Right ventricle myocardium superior (tissue), 1 donor: ENCODE measurements at regions of chr9 and their contacts with region 1.

Region 1: DNA sequence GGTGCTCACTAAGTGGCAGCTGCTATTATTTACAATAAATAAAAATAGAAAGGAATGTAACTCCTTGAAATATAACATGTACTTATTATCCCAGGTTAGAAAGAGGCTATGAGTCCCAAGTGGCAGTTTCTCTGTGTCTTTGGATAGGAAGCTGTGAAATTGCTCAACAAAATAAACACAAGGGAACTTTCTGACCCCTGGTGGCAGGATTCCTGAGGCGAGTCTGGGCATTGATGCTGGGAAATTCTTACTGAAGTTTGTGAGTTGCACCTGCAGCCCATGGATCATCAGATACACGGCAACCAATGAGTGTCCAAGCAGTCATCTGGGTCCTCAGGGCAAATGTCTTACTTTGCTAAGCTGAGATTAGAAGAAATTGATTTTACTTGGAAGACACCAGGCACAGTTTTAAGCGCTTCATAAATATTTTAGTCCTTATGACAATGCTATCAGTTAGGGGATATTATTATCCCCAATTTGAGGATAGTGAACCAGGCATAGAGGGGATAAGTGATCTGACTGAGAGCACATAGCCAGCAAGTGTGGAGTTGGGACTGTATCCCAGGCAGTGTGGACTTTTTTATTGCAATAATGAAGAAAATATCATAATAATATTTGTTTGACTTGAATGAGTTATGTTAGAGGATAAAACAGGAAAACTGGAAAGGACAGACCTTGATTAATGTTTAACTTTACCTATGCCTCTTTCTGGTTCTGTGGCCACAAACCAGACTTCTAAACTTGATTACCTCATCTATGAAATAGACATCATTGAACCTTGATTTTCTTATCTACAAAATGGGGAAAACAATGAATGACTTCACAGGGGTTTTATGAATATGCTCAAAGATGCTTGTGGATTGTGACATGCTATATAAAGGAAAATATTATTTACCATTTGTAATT is 265.5 kb upstream of the ADAMTSL1 start:
- DNase-seq: no peak
- ATAC-seq: peak; percentile 61

Region 2: DNA sequence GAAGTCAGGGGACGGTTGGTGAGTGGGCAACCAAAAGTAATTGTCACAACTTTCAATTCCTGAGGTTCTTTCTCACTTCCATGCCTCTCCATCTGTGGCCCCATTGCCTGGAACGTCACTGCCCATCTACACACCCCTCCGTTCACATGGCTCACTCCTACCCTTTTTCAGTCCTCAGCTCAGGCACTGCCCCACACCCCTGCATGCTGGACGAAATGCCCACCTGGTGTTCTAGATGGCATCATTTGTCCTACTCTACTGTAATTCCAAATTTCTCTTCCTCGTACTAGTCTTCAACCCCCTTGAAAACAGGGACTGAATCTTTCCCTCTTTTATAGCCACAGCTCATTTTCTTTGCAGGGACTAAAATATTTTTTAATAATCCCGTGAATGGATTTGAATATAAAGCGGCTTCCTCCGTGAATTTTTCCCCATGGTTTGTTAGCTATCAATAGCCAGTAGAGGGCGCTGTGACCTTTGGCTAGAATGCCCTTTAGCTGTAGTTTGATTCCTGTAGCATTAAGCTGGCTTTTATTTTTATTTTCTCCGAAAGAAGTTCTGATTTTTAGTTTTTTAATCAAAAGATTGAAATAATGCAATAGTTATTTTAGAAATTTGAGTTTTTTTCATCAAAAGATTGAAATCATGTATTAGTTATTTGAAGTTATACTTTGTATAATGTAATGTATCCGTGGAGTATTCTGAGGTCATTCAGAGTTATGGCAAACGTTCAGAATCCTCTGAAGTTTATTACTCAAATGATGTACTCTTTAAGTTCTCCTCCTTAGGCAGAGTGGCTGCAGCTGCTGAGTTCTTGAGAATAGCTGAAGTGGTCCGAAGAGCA is 397.5 kb before region 1 on chr9:
- intact Hi-C with region 1: loop called (anchors 2 kb)
- DNase-seq: no peak
- ATAC-seq: no peak

Region 3: GRCh38 chr9:18149471-18150011 is 58.9 kb before region 1 on chr9:
- intact Hi-C with region 1: loop called (anchors 10 kb)
- DNase-seq: no peak
- ATAC-seq: no peak

Region 4: GRCh38 chr9:18343784-18344183 is 135.4 kb after region 1 on chr9:
- intact Hi-C with region 1: no loop called
- DNase-seq: no peak
- ATAC-seq: no peak